ENCODE measurements at regions of chr6 and their contacts with region 1.

Region 1: DNA sequence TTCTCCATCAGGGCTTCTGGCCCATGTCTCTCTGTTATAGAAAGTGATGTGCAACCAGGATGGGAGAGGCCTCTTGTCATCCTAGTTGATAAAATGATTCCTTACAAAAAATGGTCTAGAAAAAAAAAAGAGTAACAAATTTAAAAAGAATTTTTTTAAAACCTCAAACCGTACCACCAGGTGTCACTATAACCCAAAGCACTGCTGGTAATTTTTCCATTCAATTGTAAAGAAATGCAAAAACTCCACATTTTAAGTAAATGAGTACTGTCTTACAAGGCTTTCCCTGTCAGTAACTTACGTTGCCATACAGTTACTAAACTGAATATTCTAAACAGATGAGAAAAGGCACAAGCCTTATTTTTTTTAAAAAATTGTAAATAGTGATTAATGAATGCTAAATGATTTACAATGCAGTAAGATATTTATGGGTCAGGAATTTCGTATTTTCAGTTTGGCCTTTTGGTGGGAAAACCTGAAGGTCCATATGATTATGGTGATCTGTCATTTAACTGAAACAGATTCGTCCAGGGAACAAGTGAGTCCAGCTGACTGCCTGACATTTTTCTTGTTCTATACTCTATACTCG is 95.4 kb downstream of the OGFRL1 start:
- DNase-seq: no peak
- ATAC-seq: no peak
- H3K4me3 ChIP-seq: no peak overlapping the region
- H3K27ac ChIP-seq: no peak overlapping the region
- H3K4me1 ChIP-seq: peaks cover 26 to 46% of the 10 kb centered on the region in 2 donors
- H3K27me3 ChIP-seq: no peaks in the 10 kb centered on the region
- CTCF ChIP-seq: peak; percentile 59 to 79 (median 69)
- POLR2A ChIP-seq: no peak

Region 2: GRCh38 chr6:70955441-70956190 is 428.4 kb before region 1 on chr6:
- in situ Hi-C with region 1: no loop called
- intact Hi-C with region 1: no loop called
- DNase-seq: peak; percentile 51 to 62
- ATAC-seq: peak; percentile 84 to 90
- H3K4me3 ChIP-seq: peak overlapping the region; percentile 55 to 78 (median 64)
- H3K27ac ChIP-seq: no peak overlapping the region
- H3K4me1 ChIP-seq: peaks cover 3 to 21% of the 10 kb centered on the region in 2 donors
- H3K27me3 ChIP-seq: peaks cover 26 to 38% (median 36%) of the 10 kb centered on the region in 3 donors
- CTCF ChIP-seq: peak; percentile 47 to 85 (median 81)
- POLR2A ChIP-seq: no peak

Region 3: GRCh38 chr6:71420693-71421328 is 36.8 kb after region 1 on chr6:
- in situ Hi-C with region 1: loop called in 1 of 4 experiments (anchors 10 kb)
- intact Hi-C with region 1: loop called (anchors 2 kb)
- DNase-seq: peak; percentile 97 to 98
- ATAC-seq: peak; percentile 92 to 93
- H3K4me3 ChIP-seq: peak overlapping the region; percentile 85 to 95 (median 87)
- H3K27ac ChIP-seq: peak overlapping the region; percentile 96 to 98 (median 98)
- H3K4me1 ChIP-seq: peaks cover 15 to 26% of the 10 kb centered on the region in 2 donors
- H3K27me3 ChIP-seq: no peaks in the 10 kb centered on the region
- CTCF ChIP-seq: peak in 1 of 5 experiments; percentile 11
- POLR2A ChIP-seq: peak; percentile 98 to 99

Region 4: DNA sequence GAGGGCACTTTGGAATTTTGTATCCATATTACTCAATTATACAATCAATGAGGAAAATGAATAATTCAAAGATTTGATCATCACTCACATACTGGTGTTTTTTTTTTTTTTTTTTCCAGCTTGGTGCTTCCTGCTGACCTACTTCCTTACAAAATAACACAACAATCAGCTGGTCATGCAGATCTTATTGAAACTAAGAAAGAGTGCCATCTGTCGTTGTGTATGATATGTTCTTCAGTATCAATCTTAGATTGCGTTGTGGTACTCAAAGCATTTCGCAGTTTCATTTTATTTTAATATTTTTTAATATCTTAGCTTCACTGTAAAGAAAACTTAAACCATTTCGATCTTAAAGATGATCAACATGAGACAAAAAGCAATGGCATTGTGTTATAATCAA is 60.2 kb after region 1 on chr6:
- in situ Hi-C with region 1: no loop called
- intact Hi-C with region 1: loop called (anchors 2 kb)
- DNase-seq: no peak
- ATAC-seq: peak in 1 of 2 donors; percentile 69
- H3K4me3 ChIP-seq: no peak overlapping the region
- H3K27ac ChIP-seq: no peak overlapping the region
- H3K4me1 ChIP-seq: no peaks in the 10 kb centered on the region
- H3K27me3 ChIP-seq: no peaks in the 10 kb centered on the region
- CTCF ChIP-seq: peak in 2 of 5 experiments; percentile 23 to 36
- POLR2A ChIP-seq: no peak

Region 5: DNA sequence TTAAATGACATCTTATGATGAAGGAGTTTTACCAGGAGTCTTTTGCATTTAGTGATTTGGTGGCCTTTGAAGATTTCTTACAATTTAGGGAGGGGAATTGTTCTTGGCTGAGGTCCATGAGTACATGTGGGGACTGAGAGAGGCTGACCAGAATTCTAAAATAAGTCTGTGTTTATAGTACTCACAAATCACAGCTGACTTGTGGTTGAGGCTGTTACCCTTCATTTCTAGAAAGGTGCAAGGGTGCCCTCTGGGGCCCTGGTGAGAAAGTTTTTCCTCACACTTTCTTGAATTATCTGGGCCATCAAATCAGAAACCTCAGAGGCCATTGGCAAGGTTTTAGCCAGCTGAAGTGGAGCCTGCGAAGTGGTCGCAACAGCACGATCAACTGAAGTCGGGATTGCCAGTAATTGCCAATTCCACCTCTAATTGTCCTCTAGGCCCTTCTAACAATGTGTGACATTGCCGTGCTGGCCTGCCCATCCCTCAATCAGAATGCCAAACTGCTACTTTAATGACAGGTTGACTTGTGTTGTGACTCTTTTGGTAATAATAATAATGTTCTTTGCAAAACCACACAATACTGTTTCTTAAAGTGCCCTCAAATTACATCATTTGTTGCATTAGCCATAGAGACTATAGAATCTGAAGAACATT is 126.2 kb after region 1 on chr6:
- in situ Hi-C with region 1: loop called (anchors 5 to 10 kb)
- intact Hi-C with region 1: loop called (anchors 1 kb)
- DNase-seq: peak; percentile 15 to 30
- ATAC-seq: peak; percentile 75 to 76
- H3K4me3 ChIP-seq: no peak overlapping the region
- H3K27ac ChIP-seq: no peak overlapping the region
- H3K4me1 ChIP-seq: peaks cover 6 to 9% of the 10 kb centered on the region in 2 donors
- H3K27me3 ChIP-seq: no peaks in the 10 kb centered on the region
- CTCF ChIP-seq: peak; percentile 35 to 64 (median 52)
- POLR2A ChIP-seq: no peak

Region 6: GRCh38 chr6:72084992-72085569 is 701.1 kb after region 1 on chr6:
- in situ Hi-C with region 1: loop called in 1 of 4 experiments (anchors 10 kb)
- intact Hi-C with region 1: loop called (anchors 5 kb)
- DNase-seq: no peak
- ATAC-seq: no peak
- H3K4me3 ChIP-seq: no peak overlapping the region
- H3K27ac ChIP-seq: no peak overlapping the region
- H3K4me1 ChIP-seq: no peaks in the 10 kb centered on the region
- H3K27me3 ChIP-seq: no peaks in the 10 kb centered on the region
- CTCF ChIP-seq: peak in 2 of 5 experiments; percentile 35 to 36
- POLR2A ChIP-seq: no peak